ENCODE measurements at regions of chr7 and their contacts with region 1.

Region 1: GRCh38 chr7:151472644-151473380 is 32.9 kb upstream of the CRYGN start:
- DNase-seq: peak; percentile 33
- H3K4me3 ChIP-seq: no peak overlapping the region
- H3K27ac ChIP-seq: peak overlapping the region in 2 of 4 donors; percentile 14 to 17
- H3K4me1 ChIP-seq: peaks cover 0 to 10% (median 3%) of the 10 kb centered on the region in 4 donors
- H3K27me3 ChIP-seq: no peaks in the 10 kb centered on the region
- CTCF ChIP-seq: no peak
- EP300 ChIP-seq: no peak
- POLR2A ChIP-seq: no peak

Region 2: GRCh38 chr7:151871921-151872320 is 399.1 kb after region 1 on chr7:
- in situ Hi-C with region 1: no loop called
- intact Hi-C with region 1: loop called (anchors 2 kb)
- DNase-seq: no peak
- H3K4me3 ChIP-seq: no peak overlapping the region
- H3K27ac ChIP-seq: no peak overlapping the region
- H3K4me1 ChIP-seq: peaks cover 3 to 41% (median 16%) of the 10 kb centered on the region in 4 donors
- H3K27me3 ChIP-seq: no peaks in the 10 kb centered on the region
- CTCF ChIP-seq: no peak
- EP300 ChIP-seq: no peak
- POLR2A ChIP-seq: no peak

Region 3: DNA sequence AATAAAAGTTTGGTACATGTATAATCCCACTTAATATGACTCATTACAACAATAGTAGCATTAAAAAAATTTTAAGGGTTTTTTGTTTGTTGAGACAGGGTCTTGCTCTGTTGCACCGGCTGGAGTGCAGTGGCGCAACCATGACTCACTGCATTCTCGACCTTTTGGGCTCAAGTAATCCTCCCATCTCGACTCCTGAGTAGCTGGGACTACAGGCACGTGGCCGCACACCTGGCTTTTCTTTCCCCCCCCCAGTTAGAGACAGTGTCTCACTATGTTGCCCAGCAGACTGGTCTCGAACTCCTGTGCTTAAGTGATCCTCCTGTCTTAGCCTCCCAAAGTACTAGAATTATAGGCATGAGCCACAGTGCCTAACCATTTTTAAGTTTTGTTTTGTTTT is 922.3 kb after region 1 on chr7:
- in situ Hi-C with region 1: no loop called
- intact Hi-C with region 1: no loop called
- DNase-seq: no peak
- H3K4me3 ChIP-seq: no peak overlapping the region
- H3K27ac ChIP-seq: no peak overlapping the region
- H3K4me1 ChIP-seq: peaks cover 0 to 20% (median 3%) of the 10 kb centered on the region in 4 donors
- H3K27me3 ChIP-seq: no peaks in the 10 kb centered on the region
- CTCF ChIP-seq: no peak
- EP300 ChIP-seq: no peak
- POLR2A ChIP-seq: no peak